ENCODE measurements at regions of chr1 and their contacts with region 1.

Region 1: DNA sequence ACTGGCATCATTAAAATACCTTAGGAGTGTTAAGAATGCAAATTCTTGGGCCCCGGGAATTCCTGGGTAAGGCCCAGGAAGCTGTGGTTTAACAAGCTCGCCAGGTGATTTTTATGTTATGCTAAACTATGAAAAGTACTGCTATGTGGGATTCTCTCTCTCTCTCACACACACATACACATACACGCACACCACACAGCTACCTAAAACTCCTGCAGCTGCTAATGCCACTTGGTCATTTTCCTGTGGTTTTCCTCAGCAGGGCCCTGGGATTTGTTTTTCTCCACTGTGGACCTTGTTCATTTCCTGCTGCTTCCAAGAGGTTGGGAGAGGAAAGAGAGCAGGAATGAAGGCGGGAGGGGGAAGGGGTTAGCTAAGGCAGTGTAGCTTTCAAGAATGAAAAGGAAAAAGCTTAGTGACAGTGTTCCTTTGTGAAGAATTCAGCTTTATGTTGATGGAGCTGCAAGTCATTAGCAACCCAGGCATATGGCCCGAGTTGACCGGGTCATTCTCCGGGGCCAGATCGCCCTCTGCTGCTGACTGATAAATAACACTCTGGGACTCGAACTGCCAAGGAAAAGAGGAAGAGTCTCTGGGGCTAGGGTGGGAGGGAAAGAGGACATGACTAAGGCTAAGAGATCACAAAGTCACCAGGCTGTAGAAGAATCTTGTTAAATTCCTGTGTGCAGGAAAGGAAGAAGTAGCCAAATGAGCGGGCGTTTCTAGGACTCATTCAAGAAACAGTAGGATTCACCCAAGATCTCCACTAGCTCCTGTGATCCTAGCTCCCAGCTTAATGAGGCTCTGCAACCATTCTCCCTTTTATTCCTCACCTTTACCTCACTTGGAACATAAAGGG is 30.5 kb upstream of the LRIG2 start:
- DNase-seq: no peak
- H3K4me3 ChIP-seq: no peak overlapping the region
- H3K27ac ChIP-seq: peak overlapping the region in 1 of 4 donors; percentile 4
- H3K4me1 ChIP-seq: peaks cover 5 to 14% (median 13%) of the 10 kb centered on the region in 3 donors
- H3K27me3 ChIP-seq: no peaks in the 10 kb centered on the region
- CTCF ChIP-seq: peak in 5 of 6 experiments; percentile 57 to 71 (median 67)
- POLR2A ChIP-seq: no peak

Region 2: GRCh38 chr1:112722601-112723510 is 319.7 kb before region 1 on chr1:
- intact Hi-C with region 1: loop called (anchors 10 kb)
- DNase-seq: no peak
- H3K4me3 ChIP-seq: peak overlapping the region in 3 of 4 donors; percentile 12 to 54 (median 20)
- H3K27ac ChIP-seq: no peak overlapping the region
- H3K4me1 ChIP-seq: peaks cover 9 to 30% (median 13%) of the 10 kb centered on the region in 3 donors
- H3K27me3 ChIP-seq: peaks cover 0 to 31% (median 0%) of the 10 kb centered on the region in 4 donors
- CTCF ChIP-seq: no peak
- POLR2A ChIP-seq: no peak

Region 3: GRCh38 chr1:112818990-112819689 is 223.4 kb before region 1 on chr1:
- intact Hi-C with region 1: loop called (anchors 10 kb)
- DNase-seq: no peak
- H3K4me3 ChIP-seq: no peak overlapping the region
- H3K27ac ChIP-seq: no peak overlapping the region
- H3K4me1 ChIP-seq: no peaks in the 10 kb centered on the region
- H3K27me3 ChIP-seq: no peaks in the 10 kb centered on the region
- CTCF ChIP-seq: no peak
- POLR2A ChIP-seq: no peak

Region 4: GRCh38 chr1:112882271-112882744 is 160.2 kb before region 1 on chr1:
- intact Hi-C with region 1: loop called (anchors 2 kb)
- DNase-seq: no peak
- H3K4me3 ChIP-seq: no peak overlapping the region
- H3K27ac ChIP-seq: peak overlapping the region in 1 of 4 donors; percentile 0
- H3K4me1 ChIP-seq: peaks cover 5 to 19% (median 15%) of the 10 kb centered on the region in 3 donors
- H3K27me3 ChIP-seq: no peaks in the 10 kb centered on the region
- CTCF ChIP-seq: no peak
- POLR2A ChIP-seq: no peak

Measured in esophagus squamous epithelium (tissue), 5 donors.